HEK293 (cell line): ENCODE measurements at regions of chr1 and their contacts with region 1.

Region 1: DNA sequence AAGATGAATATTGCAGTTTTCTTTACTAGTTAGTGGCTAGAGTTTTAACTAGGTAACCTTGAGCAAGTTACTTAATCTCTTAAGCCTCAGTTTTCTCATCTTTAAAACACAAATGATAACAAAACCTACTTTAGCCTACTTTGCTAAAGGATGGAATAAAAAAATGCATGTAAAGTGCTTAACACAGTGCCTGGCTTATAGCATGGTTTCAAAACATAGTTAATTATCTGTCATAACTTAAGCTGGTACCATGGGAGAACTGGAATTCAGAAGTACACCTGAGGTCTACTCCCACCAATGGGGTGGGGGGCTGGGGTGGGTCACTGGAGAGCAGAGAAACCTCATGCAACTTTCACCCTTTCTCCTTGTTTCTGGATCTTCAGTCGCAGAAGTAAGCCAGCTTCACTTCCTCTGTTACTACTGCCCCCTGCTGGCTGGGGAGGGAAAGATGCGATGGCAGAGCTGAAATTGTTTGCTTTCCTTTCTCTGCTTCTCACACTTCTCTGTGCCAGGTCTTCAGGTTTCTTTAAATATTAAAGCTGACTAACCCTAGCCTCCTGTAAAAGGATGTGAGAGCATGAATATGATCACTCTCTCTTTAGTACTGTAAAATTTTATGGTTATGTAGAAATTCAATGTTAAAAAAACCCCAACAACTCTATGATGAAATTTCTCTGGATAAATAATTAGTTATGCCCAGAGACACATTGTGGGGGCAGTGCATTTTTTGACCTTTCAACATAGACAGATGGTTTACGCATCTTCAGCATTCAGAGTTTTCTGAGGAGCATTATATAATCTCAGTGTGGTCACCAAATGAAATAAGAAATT is 324.2 kb downstream of the HLX start:
- H3K4me3 ChIP-seq: no peak overlapping the region
- H3K27ac ChIP-seq: no peak overlapping the region
- H3K4me1 ChIP-seq: no peaks in the 10 kb centered on the region
- CTCF ChIP-seq: 0 out of 2 replicates have a peak, but pooled peaks have one; percentile 14

Region 2: GRCh38 chr1:220810179-220810653 is 393.2 kb before region 1 on chr1:
- CTCF ChIA-PET with region 1: interaction called, 20 read pairs
- POLR2A ChIA-PET with region 1: no interaction called
- H3K4me3 ChIP-seq: no peak overlapping the region
- H3K27ac ChIP-seq: no peak overlapping the region
- H3K4me1 ChIP-seq: no peaks in the 10 kb centered on the region
- CTCF ChIP-seq: no peak

Region 3: GRCh38 chr1:220873868-220874655 is 329.4 kb before region 1 on chr1:
- CTCF ChIA-PET with region 1: interaction called, 32 read pairs
- POLR2A ChIA-PET with region 1: no interaction called
- H3K4me3 ChIP-seq: no peak overlapping the region
- H3K27ac ChIP-seq: no peak overlapping the region
- H3K4me1 ChIP-seq: peaks cover 3% of the 10 kb centered on the region; the same call in 1 of the 2 replicates
- CTCF ChIP-seq: peak; percentile 64

Region 4: DNA sequence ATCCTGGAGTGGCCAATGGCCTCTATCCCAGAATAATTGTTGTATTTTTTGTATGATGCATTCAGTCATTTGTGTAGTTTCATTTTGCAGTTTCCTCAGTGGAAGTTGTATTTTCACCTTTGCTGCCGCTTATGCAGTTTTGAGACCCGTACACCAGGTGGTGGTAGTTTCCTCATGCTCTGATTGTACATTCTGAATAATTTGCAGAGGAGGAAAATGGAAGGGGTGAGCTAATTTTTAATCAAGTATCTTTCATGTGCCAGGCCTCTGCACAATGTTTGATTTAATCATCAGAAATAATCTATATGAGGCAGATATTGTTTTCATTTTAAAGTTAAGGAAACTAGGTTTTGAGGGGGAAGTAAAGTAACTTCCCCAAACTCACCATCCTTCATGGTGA is 294.7 kb before region 1 on chr1:
- CTCF ChIA-PET with region 1: interaction called, 17 read pairs
- POLR2A ChIA-PET with region 1: no interaction called
- H3K4me3 ChIP-seq: no peak overlapping the region
- H3K27ac ChIP-seq: no peak overlapping the region
- H3K4me1 ChIP-seq: peaks cover 2% of the 10 kb centered on the region; the same call in 1 of the 2 replicates
- CTCF ChIP-seq: no peak

Region 5: DNA sequence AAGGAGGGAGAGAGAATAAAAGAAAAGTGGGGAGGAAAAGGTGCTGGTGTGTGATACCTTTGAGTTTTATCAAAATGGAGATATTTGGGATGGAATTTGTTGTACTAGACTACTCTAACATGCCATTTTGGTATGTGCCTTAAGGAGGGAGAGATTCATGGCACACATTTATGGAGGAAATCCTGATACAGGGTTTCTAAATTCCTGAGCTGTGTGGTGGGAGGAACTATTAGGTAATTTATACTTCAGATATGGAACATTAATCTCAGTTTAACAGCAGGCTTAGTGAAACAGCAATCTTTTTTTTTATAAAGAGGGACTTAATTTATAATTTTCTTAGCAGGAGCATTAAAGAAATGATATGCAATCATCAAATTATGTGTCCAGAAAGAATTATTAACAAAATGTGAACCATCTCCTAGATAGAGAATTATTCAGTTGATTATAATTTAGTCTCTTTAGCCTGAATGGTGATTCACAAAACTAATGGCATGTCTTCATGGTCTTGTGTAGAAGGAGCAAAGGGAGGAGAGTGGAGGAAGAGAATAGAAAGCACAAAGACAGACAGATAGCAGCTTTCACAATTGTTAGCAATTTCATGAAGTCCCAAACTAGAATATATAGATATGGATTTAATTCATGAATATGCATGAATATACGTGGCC is 22.6 kb before region 1 on chr1:
- CTCF ChIA-PET with region 1: interaction called, 10 read pairs
- POLR2A ChIA-PET with region 1: no interaction called
- H3K4me3 ChIP-seq: no peak overlapping the region
- H3K27ac ChIP-seq: no peak overlapping the region
- H3K4me1 ChIP-seq: no peaks in the 10 kb centered on the region
- CTCF ChIP-seq: no peak

Region 6: GRCh38 chr1:221217029-221217428 is 13.6 kb after region 1 on chr1:
- CTCF ChIA-PET with region 1: interaction called, 10 read pairs
- POLR2A ChIA-PET with region 1: no interaction called
- H3K4me3 ChIP-seq: no peak overlapping the region
- H3K27ac ChIP-seq: no peak overlapping the region
- H3K4me1 ChIP-seq: no peaks in the 10 kb centered on the region
- CTCF ChIP-seq: no peak

Region 7: GRCh38 chr1:221294244-221294643 is 90.8 kb after region 1 on chr1:
- CTCF ChIA-PET with region 1: no interaction called
- POLR2A ChIA-PET with region 1: no interaction called
- H3K4me3 ChIP-seq: no peak overlapping the region
- H3K27ac ChIP-seq: no peak overlapping the region
- H3K4me1 ChIP-seq: no peaks in the 10 kb centered on the region
- CTCF ChIP-seq: no peak